Posterior vena cava (tissue), 2 donors: ENCODE measurements at regions of chr12 and their contacts with region 1.

Region 1: GRCh38 chr12:7229741-7230140 is 40.3 kb downstream of the PEX5 start:
- DNase-seq: no peak

Region 2: DNA sequence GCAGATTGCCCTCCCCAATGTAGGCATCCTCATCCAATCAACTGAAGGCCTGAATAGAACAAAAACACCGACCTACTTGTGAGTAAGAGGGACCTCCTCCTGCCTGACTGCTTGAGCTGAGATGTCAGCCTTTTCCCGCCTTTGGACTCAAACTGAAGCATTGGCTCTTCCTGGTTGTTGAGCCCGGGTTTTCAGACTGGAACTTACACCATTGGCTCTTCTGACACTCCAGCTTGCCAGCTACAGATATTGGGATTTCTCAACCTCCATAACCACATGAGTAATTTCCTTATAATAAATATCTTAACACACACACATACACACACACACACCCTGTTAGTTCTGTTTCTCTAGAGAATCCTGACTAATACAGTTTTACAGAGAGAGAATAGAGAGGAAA is 1971.2 kb before region 1 on chr12:
- intact Hi-C with region 1: no loop called
- DNase-seq: no peak

Region 3: GRCh38 chr12:7460375-7461259 is 230.9 kb after region 1 on chr12:
- intact Hi-C with region 1: loop called in 1 of 2 experiments (anchors 5 kb)
- DNase-seq: no peak